ENCODE measurements at regions of chr11 and their contacts with region 1.

Region 1: DNA sequence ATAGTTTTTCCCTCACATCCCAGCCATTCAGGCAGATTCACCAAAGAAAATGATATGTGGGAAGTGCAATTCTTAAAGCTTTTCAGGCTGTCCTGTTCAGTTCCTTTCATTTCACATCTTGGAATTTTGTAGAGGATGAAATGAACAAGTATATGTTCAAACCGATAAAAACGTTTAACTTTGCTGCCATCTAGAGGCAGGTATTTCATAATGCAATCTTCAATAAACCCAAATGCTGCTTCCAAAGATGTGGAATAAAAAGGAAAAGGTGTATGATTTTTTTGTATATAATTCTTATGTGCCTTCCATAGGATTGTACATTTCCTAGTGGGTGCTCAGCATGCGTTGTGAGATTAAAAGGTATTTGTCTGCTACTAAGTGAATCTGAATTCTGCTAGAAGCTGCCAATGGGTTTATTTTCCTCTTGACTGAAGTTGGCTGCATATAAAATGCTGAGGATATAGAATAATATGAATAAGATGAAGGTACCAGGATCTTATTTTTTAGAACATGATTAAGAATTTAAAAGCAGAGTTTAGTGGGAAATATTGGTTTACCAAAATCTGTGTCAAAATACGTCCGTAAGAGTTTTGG is 199.3 kb downstream of the PGR start:
- DNase-seq: no peak
- H3K4me3 ChIP-seq: no peak overlapping the region
- H3K27ac ChIP-seq: no peak overlapping the region
- H3K4me1 ChIP-seq: peaks cover 0 to 7% (median 0%) of the 10 kb centered on the region in 4 donors
- H3K27me3 ChIP-seq: no peaks in the 10 kb centered on the region
- CTCF ChIP-seq: peak; percentile 32 to 61 (median 48)
- EP300 ChIP-seq: no peak
- POLR2A ChIP-seq: no peak

Region 2: GRCh38 chr11:100525635-100526034 is 404.6 kb before region 1 on chr11:
- intact Hi-C with region 1: no loop called
- DNase-seq: no peak
- H3K4me3 ChIP-seq: no peak overlapping the region
- H3K27ac ChIP-seq: no peak overlapping the region
- H3K4me1 ChIP-seq: no peaks in the 10 kb centered on the region
- H3K27me3 ChIP-seq: no peaks in the 10 kb centered on the region
- CTCF ChIP-seq: no peak
- EP300 ChIP-seq: no peak
- POLR2A ChIP-seq: no peak

Region 3: GRCh38 chr11:100687630-100688395 is 242.5 kb before region 1 on chr11:
- intact Hi-C with region 1: loop called (anchors 5 kb)
- DNase-seq: peak; percentile 72
- H3K4me3 ChIP-seq: peak overlapping the region; percentile 64 to 76 (median 76)
- H3K27ac ChIP-seq: peak overlapping the region; percentile 73 to 81 (median 79)
- H3K4me1 ChIP-seq: peaks cover 0 to 41% (median 16%) of the 10 kb centered on the region in 4 donors
- H3K27me3 ChIP-seq: no peaks in the 10 kb centered on the region
- CTCF ChIP-seq: peak in 3 of 4 experiments; percentile 55 to 65 (median 57)
- EP300 ChIP-seq: no peak
- POLR2A ChIP-seq: no peak